Caco-2 (cell line): ENCODE measurements at regions of chr7 and their contacts with region 1.

Region 1: DNA sequence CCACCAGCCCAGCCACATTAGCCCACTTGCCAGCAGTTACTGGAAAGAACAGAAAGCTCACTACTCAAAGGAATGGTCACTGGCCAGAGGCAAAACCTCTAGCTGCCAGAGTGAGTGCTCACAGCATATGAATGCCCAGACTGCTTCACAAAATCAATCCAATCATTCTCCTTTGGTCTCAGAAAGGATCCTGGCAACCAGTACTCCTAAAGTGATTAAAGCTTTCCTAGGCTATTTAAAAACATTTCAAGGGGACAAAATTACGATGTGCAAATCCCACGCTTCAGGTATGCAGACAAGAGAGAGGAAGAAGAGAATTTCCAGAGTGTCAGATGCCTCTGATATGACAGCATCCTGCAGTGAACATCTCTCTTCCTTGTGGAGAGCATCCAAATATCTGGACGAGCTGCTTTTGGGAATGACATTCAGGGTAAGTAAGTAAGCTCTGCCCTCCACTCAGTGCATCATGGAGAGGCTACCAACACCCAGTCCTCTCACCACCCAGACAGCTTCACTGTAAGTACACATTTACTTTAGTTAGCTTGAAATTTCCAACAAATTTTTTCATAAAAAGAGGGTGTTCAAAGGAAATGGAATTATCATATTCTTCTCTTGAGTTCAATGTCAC is 25.1 kb downstream of the ICA1 start:
- DNase-seq: no peak
- H3K4me3 ChIP-seq: no peak overlapping the region
- H3K4me3 Mint-ChIP-seq: no peak overlapping the region
- H3K27ac Mint-ChIP-seq: no peak overlapping the region
- H3K4me1 ChIP-seq: peaks cover 15% of the 10 kb centered on the region
- H3K4me1 Mint-ChIP-seq: peaks cover 29% of the 10 kb centered on the region
- H3K27me3 ChIP-seq: no peaks in the 10 kb centered on the region
- H3K27me3 Mint-ChIP-seq: no peaks in the 10 kb centered on the region
- CTCF ChIP-seq: peak in 1 of 2 experiments; percentile 5

Region 2: GRCh38 chr7:8056431-8056830 is 180.5 kb before region 1 on chr7:
- CTCF ChIA-PET with region 1: no interaction called
- POLR2A ChIA-PET with region 1: no interaction called
- intact Hi-C with region 1: no loop called
- DNase-seq: no peak
- H3K4me3 ChIP-seq: no peak overlapping the region
- H3K4me3 Mint-ChIP-seq: no peak overlapping the region
- H3K27ac Mint-ChIP-seq: no peak overlapping the region
- H3K4me1 ChIP-seq: no peaks in the 10 kb centered on the region
- H3K4me1 Mint-ChIP-seq: no peaks in the 10 kb centered on the region
- H3K27me3 ChIP-seq: no peaks in the 10 kb centered on the region
- H3K27me3 Mint-ChIP-seq: no peaks in the 10 kb centered on the region
- CTCF ChIP-seq: no peak

Region 3: DNA sequence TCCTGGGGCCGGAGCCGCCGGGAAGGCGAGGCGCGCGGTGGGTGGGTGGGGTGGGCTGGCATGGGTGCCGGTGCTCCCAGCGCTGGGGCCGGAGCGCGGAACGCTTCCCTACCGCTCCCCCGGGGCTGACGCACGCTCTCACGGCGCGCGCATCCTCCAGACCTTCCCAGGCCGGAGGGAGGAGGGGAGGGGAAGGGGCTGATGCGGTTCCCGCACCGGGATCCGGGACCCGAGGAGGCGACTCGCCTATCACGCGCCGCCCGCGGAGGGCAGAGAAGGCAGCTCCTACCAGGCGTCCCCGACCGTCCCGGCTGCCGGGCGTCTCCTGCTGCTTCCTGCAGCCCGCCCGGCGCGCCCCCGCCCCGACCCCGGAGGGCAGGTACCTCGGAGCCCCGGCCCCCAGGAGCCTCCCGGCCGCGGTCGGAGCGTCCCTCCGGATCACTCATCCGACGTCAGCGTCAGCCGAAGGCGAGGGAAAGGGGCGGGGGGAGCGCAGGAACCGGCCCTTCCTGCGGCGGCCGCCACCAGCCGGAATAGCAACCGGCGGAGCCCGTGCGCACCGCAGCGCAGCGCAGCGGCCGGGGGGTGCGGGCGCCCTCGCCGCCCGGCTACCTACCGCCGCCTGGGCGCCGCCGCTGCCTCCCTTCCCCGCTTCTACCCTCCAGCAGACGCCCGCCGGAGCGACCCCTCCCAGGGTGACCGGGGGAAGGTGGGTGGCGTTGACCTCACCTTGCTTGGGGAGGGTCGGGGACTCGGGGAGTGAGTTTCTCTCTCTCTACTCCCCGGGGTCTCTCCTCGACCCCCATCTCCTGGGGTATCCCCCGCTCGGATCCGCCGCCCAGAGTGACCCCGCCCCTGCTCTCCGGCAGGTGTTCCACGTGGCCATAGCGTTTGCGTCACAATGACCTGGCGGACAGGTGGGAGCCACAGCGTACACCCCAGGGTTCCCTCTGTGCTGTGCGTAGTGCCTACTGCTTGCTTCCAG is 25.1 kb after region 1 on chr7 and contains the start of gene ICA1:
- CTCF ChIA-PET with region 1: no interaction called
- POLR2A ChIA-PET with region 1: no interaction called
- intact Hi-C with region 1: loop called (anchors 1 kb)
- DNase-seq: peak; percentile 81 to 87
- H3K4me3 ChIP-seq: peak within 1 kb of the TSS; percentile 91
- H3K4me3 Mint-ChIP-seq: peak within 1 kb of the TSS; percentile 94
- H3K27ac Mint-ChIP-seq: peak within 1 kb of the TSS; percentile 91
- H3K4me1 ChIP-seq: peaks cover 6% of the 10 kb centered on the region; the same call in 1 of the 2 replicates
- H3K4me1 Mint-ChIP-seq: peaks cover 6% of the 10 kb centered on the region
- H3K27me3 ChIP-seq: no peaks in the 10 kb centered on the region
- H3K27me3 Mint-ChIP-seq: no peaks in the 10 kb centered on the region
- CTCF ChIP-seq: no peak
- total RNA-seq, gene ICA1: 30.7 and 34.2 TPM in 2 replicates